ENCODE measurements at regions of chr14 and their contacts with region 1.

Region 1: DNA sequence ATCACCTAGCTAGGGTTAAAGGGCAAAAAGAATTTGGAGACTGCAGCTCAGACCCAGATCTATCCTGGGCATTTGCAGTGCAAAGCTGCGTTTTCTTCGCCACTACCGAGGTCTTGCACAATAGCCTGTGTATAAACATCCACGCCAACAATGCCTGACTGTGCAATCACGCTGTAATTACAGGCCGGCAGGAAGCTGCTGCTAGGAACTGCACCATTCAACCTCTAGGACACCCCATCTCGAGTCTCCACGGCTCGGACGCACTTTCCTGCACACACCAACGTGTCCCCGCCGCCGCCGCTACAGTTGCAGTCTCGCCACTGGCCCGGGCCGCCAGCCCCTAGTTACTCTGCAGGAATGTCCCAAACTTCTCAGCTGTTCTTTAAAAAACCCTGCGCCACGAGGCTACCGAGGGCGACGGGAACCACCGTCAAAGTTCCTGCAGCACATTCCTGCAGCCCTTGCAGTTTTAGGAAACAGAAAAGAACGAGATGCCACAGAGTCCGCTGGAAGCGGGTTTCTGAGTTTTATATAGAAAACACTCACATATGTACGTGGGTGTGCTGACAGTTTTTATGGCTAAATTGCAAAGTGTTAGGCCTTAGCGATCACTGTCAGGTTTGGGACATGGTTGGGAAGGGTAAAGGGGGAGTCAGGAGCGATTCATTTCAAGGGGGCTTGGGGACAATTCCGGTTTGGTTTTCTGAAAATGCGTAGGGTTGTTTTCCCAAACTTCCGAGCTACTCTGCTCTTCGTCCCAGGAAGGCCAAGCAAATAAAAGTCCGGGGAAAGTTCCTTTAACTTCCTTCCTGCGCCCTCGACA is 65.5 kb upstream of the PTGR2 start:
- DNase-seq: peak; percentile 80
- H3K4me3 Mint-ChIP-seq: peak overlapping the region; percentile 90
- H3K27ac Mint-ChIP-seq: peak overlapping the region; percentile 93
- H3K4me1 Mint-ChIP-seq: peaks cover 56% of the 10 kb centered on the region
- H3K27me3 Mint-ChIP-seq: no peaks in the 10 kb centered on the region

Region 2: DNA sequence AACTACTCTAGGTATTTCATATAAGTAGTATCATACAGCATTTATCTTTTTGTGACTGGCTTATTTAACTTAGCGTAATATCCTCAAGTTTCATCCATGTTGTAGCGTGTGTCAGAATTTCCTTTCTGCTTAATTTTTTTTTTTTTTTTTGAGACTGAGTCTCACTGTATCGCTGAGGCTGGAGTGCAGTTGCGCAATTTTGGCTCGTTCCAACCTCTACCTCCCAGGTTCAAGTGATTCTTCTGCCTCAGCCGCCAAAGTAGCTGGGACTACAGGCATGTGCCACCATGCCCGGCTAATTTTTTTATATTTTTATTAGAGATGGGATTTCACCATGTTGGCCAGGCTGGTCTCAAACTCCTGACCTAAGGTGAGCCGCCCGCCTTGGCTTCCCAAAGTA is 100.8 kb before region 1 on chr14:
- CTCF ChIA-PET with region 1: no interaction called
- POLR2A ChIA-PET with region 1: no interaction called
- intact Hi-C with region 1: no loop called
- DNase-seq: no peak
- H3K4me3 Mint-ChIP-seq: no peak overlapping the region
- H3K27ac Mint-ChIP-seq: no peak overlapping the region
- H3K4me1 Mint-ChIP-seq: no peaks in the 10 kb centered on the region
- H3K27me3 Mint-ChIP-seq: no peaks in the 10 kb centered on the region

Region 3: DNA sequence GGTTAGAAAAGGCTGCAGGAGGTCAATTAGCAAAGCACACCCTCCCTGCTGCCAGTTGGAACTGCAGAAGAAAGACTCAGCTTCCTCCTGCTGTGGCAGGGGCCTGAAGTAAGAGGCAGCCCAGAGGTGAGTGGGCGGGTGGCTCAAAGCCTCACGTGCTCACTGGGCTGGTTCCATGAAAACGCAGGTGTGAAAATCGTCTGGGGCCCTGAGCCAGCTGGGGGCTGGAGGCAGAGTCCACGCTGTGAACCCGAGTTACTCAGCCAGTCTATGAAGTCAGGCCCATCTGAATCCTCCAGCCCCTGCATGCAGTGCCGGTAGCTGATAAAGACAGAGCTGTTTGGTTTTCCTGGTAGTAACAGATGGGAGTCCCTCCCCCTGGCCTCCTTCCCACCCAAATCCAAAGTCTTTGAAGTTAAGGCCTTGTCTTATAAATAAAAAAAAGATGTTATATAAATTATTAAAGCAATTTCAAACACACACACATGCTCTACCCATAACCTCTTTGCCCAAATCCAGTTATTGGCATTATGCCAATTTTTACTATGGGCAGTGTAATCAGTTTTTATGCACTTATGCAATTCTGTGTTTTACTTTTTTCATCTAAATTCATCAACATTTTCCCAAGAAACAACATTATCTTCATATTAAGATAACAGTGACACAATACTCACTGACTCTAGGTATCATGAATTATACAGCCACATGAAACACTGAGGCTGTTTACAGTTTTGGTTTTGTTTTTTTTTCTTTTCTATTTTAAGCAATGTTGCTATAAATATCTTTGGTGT is 14.0 kb before region 1 on chr14:
- CTCF ChIA-PET with region 1: interaction called, 39 read pairs
- POLR2A ChIA-PET with region 1: interaction called, 81 read pairs
- intact Hi-C with region 1: loop called (anchors 1 kb)
- DNase-seq: peak; percentile 93
- H3K4me3 Mint-ChIP-seq: peak overlapping the region; percentile 55
- H3K27ac Mint-ChIP-seq: peak overlapping the region; percentile 90
- H3K4me1 Mint-ChIP-seq: peaks cover 66% of the 10 kb centered on the region
- H3K27me3 Mint-ChIP-seq: no peaks in the 10 kb centered on the region

Region 4: GRCh38 chr14:73870525-73871235 is 84.6 kb after region 1 on chr14:
- CTCF ChIA-PET with region 1: no interaction called
- POLR2A ChIA-PET with region 1: no interaction called
- intact Hi-C with region 1: no loop called
- DNase-seq: no peak
- H3K4me3 Mint-ChIP-seq: no peak overlapping the region
- H3K27ac Mint-ChIP-seq: no peak overlapping the region
- H3K4me1 Mint-ChIP-seq: no peaks in the 10 kb centered on the region
- H3K27me3 Mint-ChIP-seq: no peaks in the 10 kb centered on the region

Region 5: DNA sequence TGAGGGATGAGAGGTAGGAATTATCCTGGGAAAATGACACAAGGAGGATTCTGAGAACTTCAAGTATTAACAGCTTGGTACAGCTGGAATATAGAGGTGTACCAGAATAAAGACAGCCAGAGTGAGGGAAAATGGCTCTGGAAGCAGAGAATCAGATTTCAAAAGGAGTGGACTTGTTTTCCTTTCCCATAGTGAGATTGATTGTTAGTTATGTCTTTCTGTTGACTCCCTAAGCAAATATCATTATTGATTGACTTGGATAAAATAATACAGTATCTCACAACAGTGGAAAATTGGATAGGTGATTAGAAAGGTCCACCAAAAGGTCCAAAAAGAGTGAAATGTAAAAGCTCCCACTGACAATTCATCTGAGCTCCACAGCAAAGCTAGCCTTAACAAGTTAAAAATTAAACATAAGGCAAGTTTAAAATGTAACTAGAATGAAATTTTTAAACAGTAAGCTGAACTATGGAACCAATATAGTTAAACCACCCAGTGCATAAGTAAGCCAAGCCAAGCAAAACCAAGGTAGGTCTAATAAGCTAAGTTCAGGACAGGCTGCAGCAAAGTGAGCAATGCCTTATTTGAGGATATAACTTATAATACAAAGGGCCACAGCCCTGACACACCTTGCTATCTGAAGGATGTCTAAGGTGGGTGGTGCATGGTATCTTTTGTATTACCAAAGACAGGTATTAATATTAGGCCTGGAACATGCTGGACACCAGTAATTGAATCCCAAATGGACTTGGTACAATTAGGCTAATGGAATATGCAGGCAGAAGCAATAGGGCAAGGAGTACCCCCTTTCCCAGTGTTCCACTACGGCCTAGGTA is 211.2 kb after region 1 on chr14:
- CTCF ChIA-PET with region 1: no interaction called
- POLR2A ChIA-PET with region 1: no interaction called
- intact Hi-C with region 1: no loop called
- DNase-seq: no peak
- H3K4me3 Mint-ChIP-seq: no peak overlapping the region
- H3K27ac Mint-ChIP-seq: no peak overlapping the region
- H3K4me1 Mint-ChIP-seq: no peaks in the 10 kb centered on the region
- H3K27me3 Mint-ChIP-seq: no peaks in the 10 kb centered on the region